Caco-2 (cell line): ENCODE measurements at regions of chr1 and their contacts with region 1.

Region 1: GRCh38 chr1:115595279-115596079 is 46.3 kb upstream of the VANGL1 start:
- DNase-seq: peak; percentile 73 to 75
- H3K4me3 ChIP-seq: no peak overlapping the region
- H3K4me3 Mint-ChIP-seq: no peak overlapping the region
- H3K27ac Mint-ChIP-seq: no peak overlapping the region
- H3K4me1 ChIP-seq: no peaks in the 10 kb centered on the region
- H3K4me1 Mint-ChIP-seq: no peaks in the 10 kb centered on the region
- H3K27me3 ChIP-seq: no peaks in the 10 kb centered on the region
- H3K27me3 Mint-ChIP-seq: no peaks in the 10 kb centered on the region
- CTCF ChIP-seq: peak; percentile 74 to 81

Region 2: GRCh38 chr1:115138968-115139367 is 456.5 kb before region 1 on chr1:
- CTCF ChIA-PET with region 1: interaction called, 5 read pairs
- POLR2A ChIA-PET with region 1: no interaction called
- intact Hi-C with region 1: loop called (anchors 2 kb)
- DNase-seq: peak; percentile 76
- H3K4me3 ChIP-seq: no peak overlapping the region
- H3K4me3 Mint-ChIP-seq: no peak overlapping the region
- H3K27ac Mint-ChIP-seq: no peak overlapping the region
- H3K4me1 ChIP-seq: peaks cover 13% of the 10 kb centered on the region
- H3K4me1 Mint-ChIP-seq: peaks cover 29% of the 10 kb centered on the region
- H3K27me3 ChIP-seq: no peaks in the 10 kb centered on the region
- H3K27me3 Mint-ChIP-seq: no peaks in the 10 kb centered on the region
- CTCF ChIP-seq: peak; percentile 66 to 73

Region 3: DNA sequence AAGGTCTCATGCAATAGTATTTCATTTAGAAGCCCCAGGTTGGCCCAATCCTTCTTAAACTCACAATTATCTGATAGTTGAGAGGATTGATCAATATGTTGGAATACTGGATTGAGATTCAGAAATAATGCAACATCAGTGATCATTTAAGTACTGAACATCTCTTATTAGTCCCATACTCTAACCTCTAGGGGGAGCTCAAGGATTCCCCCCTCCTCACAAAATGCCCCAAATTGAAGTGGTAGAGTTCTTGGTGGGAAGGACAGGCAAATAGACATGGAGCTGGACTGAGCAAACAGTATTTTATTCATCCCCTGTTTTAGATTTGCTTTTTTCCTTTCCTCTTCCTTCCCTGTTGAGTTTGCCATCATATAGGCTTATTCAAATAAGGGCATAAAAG is 320.3 kb before region 1 on chr1:
- CTCF ChIA-PET with region 1: no interaction called
- POLR2A ChIA-PET with region 1: no interaction called
- intact Hi-C with region 1: loop called (anchors 5 kb)
- DNase-seq: no peak
- H3K4me3 ChIP-seq: no peak overlapping the region
- H3K4me3 Mint-ChIP-seq: no peak overlapping the region
- H3K27ac Mint-ChIP-seq: no peak overlapping the region
- H3K4me1 ChIP-seq: no peaks in the 10 kb centered on the region
- H3K4me1 Mint-ChIP-seq: no peaks in the 10 kb centered on the region
- H3K27me3 ChIP-seq: no peaks in the 10 kb centered on the region
- H3K27me3 Mint-ChIP-seq: peaks cover 4% of the 10 kb centered on the region
- CTCF ChIP-seq: peak; percentile 10 to 22

Region 4: GRCh38 chr1:115469703-115470476 is 125.6 kb before region 1 on chr1:
- CTCF ChIA-PET with region 1: interaction called, 3 read pairs
- POLR2A ChIA-PET with region 1: no interaction called
- intact Hi-C with region 1: loop called (anchors 2 kb)
- DNase-seq: peak; percentile 50 to 66
- H3K4me3 ChIP-seq: no peak overlapping the region
- H3K4me3 Mint-ChIP-seq: no peak overlapping the region
- H3K27ac Mint-ChIP-seq: no peak overlapping the region
- H3K4me1 ChIP-seq: no peaks in the 10 kb centered on the region
- H3K4me1 Mint-ChIP-seq: no peaks in the 10 kb centered on the region
- H3K27me3 ChIP-seq: no peaks in the 10 kb centered on the region
- H3K27me3 Mint-ChIP-seq: no peaks in the 10 kb centered on the region
- CTCF ChIP-seq: peak; percentile 73 to 84

Region 5: GRCh38 chr1:115545791-115546733 is 49.4 kb before region 1 on chr1:
- CTCF ChIA-PET with region 1: interaction called, 4 read pairs
- POLR2A ChIA-PET with region 1: no interaction called
- intact Hi-C with region 1: loop called (anchors 1 kb)
- DNase-seq: peak; percentile 70 to 81
- H3K4me3 ChIP-seq: no peak overlapping the region
- H3K4me3 Mint-ChIP-seq: no peak overlapping the region
- H3K27ac Mint-ChIP-seq: peak overlapping the region; percentile 92
- H3K4me1 ChIP-seq: peaks cover 18% of the 10 kb centered on the region
- H3K4me1 Mint-ChIP-seq: peaks cover 12% of the 10 kb centered on the region
- H3K27me3 ChIP-seq: no peaks in the 10 kb centered on the region
- H3K27me3 Mint-ChIP-seq: no peaks in the 10 kb centered on the region
- CTCF ChIP-seq: peak; percentile 27 to 58